CD8-positive, alpha-beta T cell (primary cell): ENCODE measurements at regions of chr1 and their contacts with region 1.

Region 1: GRCh38 chr1:35192853-35193664 is at the start of gene SFPQ:
- DNase-seq: peak; percentile 96 to 99 (median 97)
- ATAC-seq: peak; percentile 87
- H3K4me3 ChIP-seq: peak within 1 kb of the TSS; percentile 59 to 81
- H3K4me3 Mint-ChIP-seq: peak within 1 kb of the TSS; percentile 95
- H3K27ac ChIP-seq: peak within 1 kb of the TSS; percentile 92 to 97
- H3K27ac Mint-ChIP-seq: peak within 1 kb of the TSS; percentile 99
- H3K4me1 ChIP-seq: peaks cover 36% of the 10 kb centered on the region
- H3K4me1 Mint-ChIP-seq: peaks cover 44% of the 10 kb centered on the region
- H3K27me3 ChIP-seq: no peaks in the 10 kb centered on the region
- H3K27me3 Mint-ChIP-seq: no peaks in the 10 kb centered on the region
- CTCF ChIP-seq: no peak
- total RNA-seq, gene SFPQ: 801 to 841 TPM

Region 2: DNA sequence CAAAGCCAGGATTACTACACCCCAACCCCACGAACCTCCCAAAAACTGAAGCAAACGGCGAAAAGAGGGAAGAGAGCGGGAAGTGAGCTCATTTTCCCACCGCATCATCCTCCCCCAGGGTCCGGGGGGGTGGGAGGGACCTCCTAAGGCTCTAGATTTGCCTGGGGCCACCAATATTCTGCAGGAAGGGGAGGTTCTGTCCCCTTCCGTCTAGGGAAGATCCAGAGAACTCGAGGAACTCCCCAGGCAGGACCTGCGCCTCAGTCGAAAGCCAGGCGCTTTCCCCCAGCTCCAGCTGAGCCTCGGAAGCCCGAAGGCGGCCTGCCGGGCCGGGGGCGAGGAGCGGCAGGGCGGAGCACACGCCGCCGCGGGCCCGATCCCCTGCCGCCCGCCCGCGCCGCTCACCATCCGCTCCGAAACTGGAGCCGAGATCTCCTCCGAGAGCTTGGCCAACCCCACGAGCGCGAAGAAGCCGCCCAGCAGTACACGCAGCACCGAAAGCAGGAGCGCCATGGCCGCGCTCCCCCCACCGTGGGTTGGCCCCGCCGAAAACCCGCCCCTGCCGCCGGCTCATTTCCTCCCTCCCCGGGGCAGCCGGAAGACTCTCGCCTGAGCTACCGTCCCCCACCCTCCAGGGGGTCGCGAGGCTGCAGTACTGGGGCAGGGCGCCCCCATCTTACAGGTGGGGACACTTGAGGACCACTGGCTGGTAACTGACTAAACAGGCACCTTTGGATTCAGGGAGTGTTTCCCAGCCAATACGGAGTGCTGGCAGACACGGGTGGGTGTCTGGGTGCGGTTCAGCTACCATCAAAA is 208.1 kb before region 1 on chr1 and contains the start of gene TMEM35B:
- CTCF ChIA-PET with region 1: no interaction called
- POLR2A ChIA-PET with region 1: interaction called, 5 read pairs
- intact Hi-C with region 1: loop called in 1 of 2 experiments (anchors 2 kb)
- DNase-seq: peak; percentile 55 to 87 (median 82)
- ATAC-seq: peak; percentile 96
- H3K4me3 ChIP-seq: peak within 1 kb of the TSS; percentile 77 to 81
- H3K4me3 Mint-ChIP-seq: peak within 1 kb of the TSS; percentile 99
- H3K27ac ChIP-seq: peak within 1 kb of the TSS; percentile 80 to 87
- H3K27ac Mint-ChIP-seq: peak within 1 kb of the TSS; percentile 98
- H3K4me1 ChIP-seq: peaks cover 28% of the 10 kb centered on the region
- H3K4me1 Mint-ChIP-seq: peaks cover 42% of the 10 kb centered on the region
- H3K27me3 ChIP-seq: no peaks in the 10 kb centered on the region
- H3K27me3 Mint-ChIP-seq: no peaks in the 10 kb centered on the region
- CTCF ChIP-seq: no peak
- total RNA-seq, gene TMEM35B: 1.0 to 2.6 TPM

Region 3: DNA sequence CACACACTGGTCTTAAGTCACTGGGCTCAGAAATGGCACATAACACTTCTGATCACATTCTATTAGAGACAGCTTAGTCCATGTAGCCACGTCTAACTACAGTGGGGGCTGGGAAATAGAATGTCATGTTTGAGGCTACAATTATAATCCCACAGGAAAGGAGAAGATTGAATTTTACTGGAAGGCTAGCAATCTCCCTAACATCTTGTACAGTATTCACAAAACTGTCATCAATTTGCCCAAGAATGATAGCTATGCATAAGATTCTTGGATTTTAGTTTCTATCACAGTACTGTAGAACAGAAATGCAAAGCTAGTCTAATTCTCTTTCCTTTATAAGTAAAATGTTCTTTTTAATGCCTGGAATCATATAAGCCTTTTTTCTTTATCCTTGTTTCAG is 148.6 kb before region 1 on chr1:
- CTCF ChIA-PET with region 1: no interaction called
- POLR2A ChIA-PET with region 1: no interaction called
- intact Hi-C with region 1: no loop called
- DNase-seq: no peak
- ATAC-seq: no peak
- H3K4me3 ChIP-seq: no peak overlapping the region
- H3K4me3 Mint-ChIP-seq: no peak overlapping the region
- H3K27ac ChIP-seq: no peak overlapping the region
- H3K27ac Mint-ChIP-seq: no peak overlapping the region
- H3K4me1 ChIP-seq: no peaks in the 10 kb centered on the region
- H3K4me1 Mint-ChIP-seq: no peaks in the 10 kb centered on the region
- H3K27me3 ChIP-seq: no peaks in the 10 kb centered on the region
- H3K27me3 Mint-ChIP-seq: peaks cover 3% of the 10 kb centered on the region
- CTCF ChIP-seq: no peak

Region 4: DNA sequence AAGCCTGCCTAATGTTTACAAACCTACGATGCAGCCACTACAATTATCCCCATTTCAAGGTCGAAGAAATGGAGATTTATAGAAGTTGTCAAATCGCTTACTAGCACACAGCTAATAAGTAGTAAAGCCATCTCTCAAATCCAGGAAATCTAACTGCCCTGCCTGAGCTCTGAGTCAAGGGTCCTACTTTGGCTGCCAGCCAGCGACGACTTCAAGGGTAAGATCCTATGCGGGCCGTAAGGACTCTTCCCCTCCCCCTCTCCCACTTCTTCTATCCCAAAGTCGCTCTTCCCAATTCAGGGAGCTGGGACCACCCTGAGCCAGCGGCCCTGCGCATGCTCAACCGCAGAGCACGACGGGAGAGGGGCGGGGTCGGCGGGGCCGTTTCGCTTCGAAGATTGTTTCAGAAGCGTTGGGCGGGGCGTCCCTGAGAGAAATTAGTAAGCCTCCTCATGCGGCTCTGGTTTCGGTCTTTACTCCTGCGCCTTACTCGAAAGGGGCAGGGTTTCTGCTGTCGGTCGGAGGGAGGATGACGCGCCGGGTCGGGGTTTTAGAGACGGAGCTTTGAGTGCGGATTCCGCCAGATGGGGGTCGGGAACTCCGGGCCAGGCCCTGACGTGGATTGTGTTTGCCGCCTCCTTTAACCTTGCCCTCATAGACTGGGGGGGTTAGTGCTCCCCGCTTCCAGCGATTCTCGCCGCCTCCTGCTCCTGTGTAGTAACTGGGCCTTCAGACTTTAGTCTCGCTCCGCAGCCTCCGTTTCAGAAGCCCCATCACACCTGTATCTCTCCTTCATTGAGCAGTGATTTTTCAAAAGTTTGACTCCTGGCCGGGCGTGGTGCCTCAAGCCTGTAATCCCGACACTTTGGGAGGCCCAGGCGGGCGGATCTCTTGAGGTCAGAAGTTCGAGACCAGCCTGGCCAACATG is 113.8 kb before region 1 on chr1 and contains the start of gene ZMYM1:
- CTCF ChIA-PET with region 1: no interaction called
- POLR2A ChIA-PET with region 1: no interaction called
- intact Hi-C with region 1: loop called (anchors 2 to 5 kb)
- DNase-seq: peak; percentile 49 to 89 (median 84)
- ATAC-seq: peak; percentile 92
- H3K4me3 ChIP-seq: peak within 1 kb of the TSS; percentile 82 to 83
- H3K4me3 Mint-ChIP-seq: peak within 1 kb of the TSS; percentile 98
- H3K27ac ChIP-seq: peak within 1 kb of the TSS; percentile 85 to 95
- H3K27ac Mint-ChIP-seq: peak within 1 kb of the TSS; percentile 99
- H3K4me1 ChIP-seq: peaks cover 16% of the 10 kb centered on the region
- H3K4me1 Mint-ChIP-seq: peaks cover 37% of the 10 kb centered on the region
- H3K27me3 ChIP-seq: no peaks in the 10 kb centered on the region
- H3K27me3 Mint-ChIP-seq: peaks cover 8% of the 10 kb centered on the region
- CTCF ChIP-seq: no peak
- total RNA-seq, gene ZMYM1: 3.7 to 6.0 TPM

Region 5: GRCh38 chr1:35268282-35269200 is 75.5 kb after region 1 on chr1 and contains the start of gene ZMYM4:
- CTCF ChIA-PET with region 1: no interaction called
- POLR2A ChIA-PET with region 1: interaction called, 4 read pairs
- intact Hi-C with region 1: loop called (anchors 1 kb)
- DNase-seq: peak; percentile 70 to 96 (median 88)
- ATAC-seq: peak; percentile 95
- H3K4me3 ChIP-seq: peak within 1 kb of the TSS; percentile 65 to 73
- H3K4me3 Mint-ChIP-seq: peak within 1 kb of the TSS; percentile 89
- H3K27ac ChIP-seq: peak within 1 kb of the TSS; percentile 40 to 68
- H3K27ac Mint-ChIP-seq: peak within 1 kb of the TSS; percentile 93
- H3K4me1 ChIP-seq: peaks cover 14% of the 10 kb centered on the region
- H3K4me1 Mint-ChIP-seq: peaks cover 38% of the 10 kb centered on the region
- H3K27me3 ChIP-seq: no peaks in the 10 kb centered on the region
- H3K27me3 Mint-ChIP-seq: peaks cover 10% of the 10 kb centered on the region
- CTCF ChIP-seq: no peak
- total RNA-seq, gene ZMYM4: 32.1 to 36.5 TPM

Region 6: GRCh38 chr1:35769759-35770446 is 576.8 kb after region 1 on chr1 and contains the start of gene CLSPN:
- CTCF ChIA-PET with region 1: no interaction called
- POLR2A ChIA-PET with region 1: interaction called, 3 read pairs
- intact Hi-C with region 1: loop called in 1 of 2 experiments (anchors 10 kb)
- DNase-seq: peak; percentile 86 to 96 (median 93)
- ATAC-seq: peak; percentile 94
- H3K4me3 ChIP-seq: peak within 1 kb of the TSS; percentile 90 to 97
- H3K4me3 Mint-ChIP-seq: peak within 1 kb of the TSS; percentile 99
- H3K27ac ChIP-seq: peak within 1 kb of the TSS; percentile 61 to 81
- H3K27ac Mint-ChIP-seq: peak within 1 kb of the TSS; percentile 92
- H3K4me1 ChIP-seq: peaks cover 5% of the 10 kb centered on the region
- H3K4me1 Mint-ChIP-seq: peaks cover 8% of the 10 kb centered on the region
- H3K27me3 ChIP-seq: no peaks in the 10 kb centered on the region
- H3K27me3 Mint-ChIP-seq: no peaks in the 10 kb centered on the region
- CTCF ChIP-seq: no peak
- total RNA-seq, gene CLSPN: 0.41 to 0.81 TPM

Region 7: DNA sequence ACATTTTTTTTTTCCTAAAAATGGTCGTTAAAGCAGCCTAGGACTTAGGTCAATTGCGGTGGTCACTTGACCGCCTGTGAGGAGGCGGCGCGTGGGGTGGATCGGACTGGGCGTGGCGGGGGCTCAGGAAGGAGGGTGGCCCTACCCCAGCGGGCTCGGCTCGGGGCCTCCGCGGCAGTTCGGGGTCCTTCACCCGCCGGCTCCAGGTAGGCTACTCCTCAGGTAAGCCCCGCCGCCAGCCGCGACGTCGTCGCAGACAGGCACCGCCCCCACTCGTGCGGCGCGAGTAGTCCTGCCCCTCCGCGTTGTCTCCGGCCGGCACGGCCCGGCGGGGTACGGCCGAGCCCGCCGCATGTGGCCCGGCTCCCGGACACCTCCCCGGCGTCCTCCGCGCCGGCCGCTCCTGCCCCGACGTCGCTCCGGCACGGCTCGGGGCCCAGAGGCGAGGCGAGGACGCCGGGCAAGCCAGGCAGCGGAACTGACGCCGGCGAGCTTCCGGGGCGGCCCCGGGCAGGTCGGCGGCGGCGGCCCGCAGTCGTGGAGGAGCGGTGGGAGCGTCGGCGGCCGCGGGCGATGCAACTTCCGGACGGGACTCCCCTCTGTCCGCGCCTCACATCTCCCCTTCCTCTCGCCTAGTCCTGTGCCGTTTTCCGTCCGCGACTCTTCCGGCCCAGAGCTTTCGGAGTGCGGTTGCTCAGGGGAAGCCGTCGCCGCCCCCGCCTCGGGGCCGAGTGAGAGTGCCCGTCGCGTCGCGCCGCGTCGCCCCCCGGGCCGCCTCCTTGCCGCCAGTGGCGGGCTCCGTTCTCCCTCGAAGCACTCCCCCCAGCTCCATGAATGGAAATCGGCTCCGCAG is 737.8 kb after region 1 on chr1 and contains the start of gene AGO3:
- CTCF ChIA-PET with region 1: no interaction called
- POLR2A ChIA-PET with region 1: no interaction called
- intact Hi-C with region 1: loop called (anchors 1 to 5 kb)
- DNase-seq: peak; percentile 70 to 97 (median 84)
- ATAC-seq: peak; percentile 79
- H3K4me3 ChIP-seq: peak within 1 kb of the TSS; percentile 66 to 93
- H3K4me3 Mint-ChIP-seq: peak within 1 kb of the TSS; percentile 94
- H3K27ac ChIP-seq: peak within 1 kb of the TSS; percentile 96
- H3K27ac Mint-ChIP-seq: peak within 1 kb of the TSS; percentile 98
- H3K4me1 ChIP-seq: peaks cover 28% of the 10 kb centered on the region
- H3K4me1 Mint-ChIP-seq: peaks cover 35% of the 10 kb centered on the region
- H3K27me3 ChIP-seq: no peaks in the 10 kb centered on the region
- H3K27me3 Mint-ChIP-seq: no peaks in the 10 kb centered on the region
- CTCF ChIP-seq: no peak
- total RNA-seq, gene AGO3: 27.6 to 30.2 TPM